ENCODE measurements at regions of chr15 and their contacts with region 1.

Region 1: GRCh38 chr15:95259513-95259912 is 1028.2 kb downstream of the MCTP2 start:
- DNase-seq: peak; percentile 92
- H3K4me3 ChIP-seq: no peak overlapping the region
- H3K27ac ChIP-seq: peak overlapping the region; percentile 89
- H3K4me1 ChIP-seq: peaks cover 46% of the 10 kb centered on the region
- H3K27me3 ChIP-seq: no peaks in the 10 kb centered on the region
- CTCF ChIP-seq: peak; percentile 71
- POLR2A ChIP-seq: no peak

Region 2: DNA sequence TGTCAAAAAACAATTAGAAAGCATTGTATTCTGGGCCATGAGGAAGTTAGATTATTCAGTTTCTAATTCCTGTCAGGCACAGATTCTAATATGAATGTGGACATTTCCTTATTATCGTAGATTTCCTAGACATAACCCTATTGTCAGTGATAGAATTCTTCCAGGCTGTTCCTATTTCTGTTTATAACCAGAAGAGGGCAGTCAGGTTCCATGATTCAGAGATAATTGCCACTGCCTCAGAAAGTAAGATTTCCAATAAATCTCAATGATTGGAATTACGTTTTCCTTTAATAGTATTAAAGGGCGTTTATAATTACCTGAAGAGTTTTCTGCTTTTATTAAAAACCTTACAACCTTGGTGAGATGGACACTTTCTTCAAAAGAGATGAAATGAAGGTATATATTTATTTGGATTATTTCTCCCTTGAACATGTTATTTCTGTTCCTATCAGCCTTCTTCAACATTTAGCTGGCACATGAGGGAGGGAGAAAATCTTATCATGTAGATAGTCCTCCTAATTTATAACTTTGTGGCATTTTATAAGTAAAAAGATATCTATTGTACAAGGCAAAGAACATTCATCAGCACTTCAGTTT is 589.0 kb before region 1 on chr15:
- CTCF ChIA-PET with region 1: interaction called, 32 read pairs
- POLR2A ChIA-PET with region 1: no interaction called
- dilution Hi-C with region 1: no loop called
- intact Hi-C with region 1: loop called (anchors 1 kb)
- DNase-seq: peak; percentile 84
- H3K4me3 ChIP-seq: no peak overlapping the region
- H3K27ac ChIP-seq: peak overlapping the region; percentile 72
- H3K4me1 ChIP-seq: peaks cover 33% of the 10 kb centered on the region
- H3K27me3 ChIP-seq: no peaks in the 10 kb centered on the region
- CTCF ChIP-seq: peak; percentile 38 to 45
- POLR2A ChIP-seq: no peak

Region 3: DNA sequence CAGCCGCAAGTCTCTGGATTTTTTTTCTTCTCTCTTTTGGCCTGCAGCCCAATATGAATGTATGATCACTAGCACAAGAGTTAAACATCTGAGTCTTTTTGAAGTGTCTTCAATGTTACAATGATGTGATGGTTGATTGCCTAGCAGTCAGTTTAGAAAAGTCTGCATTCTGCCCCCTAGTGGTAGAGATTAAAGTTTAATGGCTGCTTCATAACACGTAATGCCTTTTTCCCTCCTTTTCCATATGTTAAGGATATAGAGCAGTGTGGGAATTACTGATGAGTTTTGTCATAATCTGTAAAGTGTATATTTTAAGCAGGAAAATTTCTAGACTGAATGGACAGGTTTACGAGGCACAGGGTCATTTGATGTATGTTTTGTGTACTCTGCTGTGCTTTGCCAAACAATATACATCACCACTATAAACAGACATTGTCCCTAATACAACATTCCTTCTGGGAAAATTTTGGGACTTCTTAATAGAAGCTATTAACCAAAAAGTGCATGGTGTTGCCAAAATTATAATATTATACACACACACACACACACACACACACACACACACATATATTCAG is 32.5 kb after region 1 on chr15:
- CTCF ChIA-PET with region 1: interaction called, 24 read pairs
- POLR2A ChIA-PET with region 1: interaction called, 3 read pairs
- dilution Hi-C with region 1: no loop called
- intact Hi-C with region 1: loop called (anchors 1 kb)
- DNase-seq: peak; percentile 61
- H3K4me3 ChIP-seq: no peak overlapping the region
- H3K27ac ChIP-seq: no peak overlapping the region
- H3K4me1 ChIP-seq: peaks cover 55% of the 10 kb centered on the region
- H3K27me3 ChIP-seq: no peaks in the 10 kb centered on the region
- CTCF ChIP-seq: peak; percentile 41 to 58
- POLR2A ChIP-seq: no peak

Region 4: DNA sequence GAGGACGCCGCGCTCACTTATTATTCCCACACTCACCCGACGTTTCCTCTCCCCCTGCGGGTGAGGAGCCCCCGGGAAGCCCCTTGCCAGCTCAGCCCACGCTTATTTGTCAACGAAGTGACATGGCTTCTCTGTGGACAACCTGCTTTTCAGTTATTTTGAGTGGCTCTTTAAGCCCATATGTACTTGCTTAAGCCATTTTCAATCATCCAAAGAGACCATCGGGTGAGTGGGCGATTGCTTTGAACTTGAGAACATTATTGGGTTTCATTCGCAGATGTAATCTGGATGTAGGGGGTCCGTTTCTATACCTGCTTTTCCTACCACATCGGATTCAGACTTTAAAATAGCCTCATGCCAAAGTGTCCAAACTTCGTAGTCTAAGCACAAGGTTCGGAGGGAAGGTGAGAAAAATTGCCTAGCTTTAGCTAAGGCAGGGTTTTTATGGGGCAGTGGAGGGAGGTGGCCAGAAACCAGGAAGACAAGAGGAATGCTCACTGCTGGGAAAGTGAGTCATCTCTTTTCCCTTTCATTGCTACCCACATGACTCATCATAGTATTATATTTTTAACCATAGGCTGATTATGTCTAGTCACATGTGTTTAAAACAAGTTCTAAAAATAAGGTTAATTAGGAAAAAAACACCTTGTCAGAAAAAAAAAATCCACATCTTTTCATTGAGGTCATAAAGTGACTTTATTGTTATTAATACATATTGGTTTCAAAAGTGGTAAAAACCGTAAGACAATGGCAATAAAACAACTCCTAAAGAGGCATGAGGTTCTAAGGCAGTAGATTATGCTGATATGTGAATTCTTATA is 297.9 kb after region 1 on chr15:
- CTCF ChIA-PET with region 1: interaction called, 6 read pairs
- POLR2A ChIA-PET with region 1: no interaction called
- dilution Hi-C with region 1: no loop called
- intact Hi-C with region 1: loop called (anchors 1 kb)
- DNase-seq: peak; percentile 96
- H3K4me3 ChIP-seq: peak overlapping the region in 1 of 3 experiments; percentile 10
- H3K27ac ChIP-seq: peak overlapping the region; percentile 100
- H3K4me1 ChIP-seq: peaks cover 39% of the 10 kb centered on the region
- H3K27me3 ChIP-seq: no peaks in the 10 kb centered on the region
- CTCF ChIP-seq: no peak
- POLR2A ChIP-seq: no peak

Region 5: GRCh38 chr15:96160269-96160668 is 900.8 kb after region 1 on chr15:
- CTCF ChIA-PET with region 1: interaction called, 3 read pairs
- POLR2A ChIA-PET with region 1: no interaction called
- dilution Hi-C with region 1: no loop called
- intact Hi-C with region 1: loop called (anchors 5 kb)
- DNase-seq: peak; percentile 95
- H3K4me3 ChIP-seq: peak overlapping the region in 1 of 3 experiments; percentile 26
- H3K27ac ChIP-seq: peak overlapping the region; percentile 28
- H3K4me1 ChIP-seq: peaks cover 33% of the 10 kb centered on the region
- H3K27me3 ChIP-seq: no peaks in the 10 kb centered on the region
- CTCF ChIP-seq: no peak
- POLR2A ChIP-seq: no peak

Region 6: DNA sequence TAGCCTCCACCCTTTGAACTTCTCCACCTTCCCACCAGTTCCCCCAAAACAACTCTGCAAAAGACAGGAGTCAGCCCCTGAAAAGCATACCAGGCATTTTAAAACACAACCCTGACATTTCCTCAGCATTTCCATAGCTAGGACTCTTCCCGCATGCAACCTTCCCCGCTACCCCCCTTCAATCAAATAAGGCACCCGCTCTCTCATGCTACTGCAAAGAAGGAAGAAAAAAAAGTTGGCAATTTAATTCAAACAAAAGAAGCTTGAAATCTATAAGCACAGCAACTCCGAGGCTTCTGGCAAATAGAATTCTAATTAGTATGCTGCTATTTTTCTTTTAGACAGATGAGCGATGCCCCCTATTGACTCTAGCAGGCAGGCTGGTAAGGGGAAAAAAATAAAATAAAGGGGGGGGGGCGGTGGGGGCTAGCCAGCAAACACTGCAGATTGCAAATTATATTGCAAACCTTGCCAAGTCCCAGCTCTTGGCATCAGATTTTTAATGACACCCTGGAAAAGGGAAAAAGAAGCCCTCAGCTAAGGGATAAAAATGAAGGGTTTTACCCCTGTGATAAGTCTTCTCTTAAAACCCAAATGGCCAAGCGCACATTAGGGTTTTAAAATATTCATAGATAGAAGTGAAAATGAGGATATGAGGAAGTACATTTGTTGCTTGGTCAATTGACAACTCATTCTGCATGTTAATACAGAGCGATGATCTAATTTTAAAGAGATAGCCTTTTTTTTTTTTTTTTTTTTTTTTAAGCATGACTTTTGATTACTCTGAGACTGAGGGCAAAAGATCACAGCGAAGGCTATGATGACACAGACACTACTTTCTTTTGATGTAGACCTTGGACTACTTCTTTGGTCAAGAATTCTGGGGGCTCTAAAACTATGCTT is 1326.2 kb after region 1 on chr15:
- CTCF ChIA-PET with region 1: interaction called, 5 read pairs
- POLR2A ChIA-PET with region 1: no interaction called
- dilution Hi-C with region 1: no loop called
- intact Hi-C with region 1: loop called (anchors 1 kb)
- DNase-seq: peak; percentile 39
- H3K4me3 ChIP-seq: no peak overlapping the region
- H3K27ac ChIP-seq: no peak overlapping the region
- H3K4me1 ChIP-seq: no peaks in the 10 kb centered on the region
- H3K27me3 ChIP-seq: peaks cover 0 to 2% of the 10 kb centered on the region in 2 experiments
- CTCF ChIP-seq: peak in 1 of 2 donors; percentile 33
- POLR2A ChIP-seq: no peak

Measured in endothelial cell of umbilical vein (primary cell).